HEK293 (cell line): ENCODE measurements at regions of chr2 and their contacts with region 1.

Region 1: GRCh38 chr2:197113275-197113711 is 186.8 kb upstream of the PGAP1 start:
- H3K4me3 ChIP-seq: no peak overlapping the region
- H3K27ac ChIP-seq: no peak overlapping the region
- H3K4me1 ChIP-seq: no peaks in the 10 kb centered on the region
- CTCF ChIP-seq: 0 out of 2 replicates have a peak, but pooled peaks have one; percentile 18

Region 2: DNA sequence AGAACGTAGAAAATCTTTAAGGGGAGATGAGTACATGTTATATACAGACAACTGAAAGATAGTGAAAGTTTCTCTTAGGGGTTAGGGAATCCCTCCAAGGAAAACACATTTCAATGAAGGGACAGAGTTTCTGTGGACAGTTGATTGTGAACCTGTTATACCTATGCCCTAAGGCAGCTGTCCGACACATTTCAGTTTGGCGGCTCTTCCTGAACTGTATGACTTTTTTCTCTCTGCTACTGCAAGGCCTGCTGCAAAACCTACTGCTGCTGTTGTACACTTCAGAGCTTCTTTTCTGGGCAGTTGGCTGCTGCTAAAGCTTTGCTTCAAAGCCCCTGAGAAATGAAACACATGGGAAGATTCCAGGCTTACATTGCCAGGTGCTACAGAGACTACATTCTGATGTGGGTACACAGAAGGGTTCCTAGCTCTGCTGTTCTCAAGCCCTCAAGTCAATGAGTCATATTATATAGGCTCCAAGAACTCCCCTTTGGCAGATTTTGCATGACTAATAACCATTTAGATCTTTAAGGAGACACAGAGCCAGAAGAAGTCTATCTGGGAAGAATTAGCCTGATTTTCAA is 174.0 kb before region 1 on chr2:
- CTCF ChIA-PET with region 1: no interaction called
- POLR2A ChIA-PET with region 1: no interaction called
- H3K4me3 ChIP-seq: no peak overlapping the region
- H3K27ac ChIP-seq: no peak overlapping the region
- H3K4me1 ChIP-seq: peaks cover 3% of the 10 kb centered on the region; the same call in 1 of the 2 replicates
- CTCF ChIP-seq: no peak

Region 3: GRCh38 chr2:197097578-197098366 is 15.5 kb before region 1 on chr2:
- CTCF ChIA-PET with region 1: interaction called, 16 read pairs
- POLR2A ChIA-PET with region 1: no interaction called
- H3K4me3 ChIP-seq: no peak overlapping the region
- H3K27ac ChIP-seq: no peak overlapping the region
- H3K4me1 ChIP-seq: no peaks in the 10 kb centered on the region
- CTCF ChIP-seq: no peak

Region 4: DNA sequence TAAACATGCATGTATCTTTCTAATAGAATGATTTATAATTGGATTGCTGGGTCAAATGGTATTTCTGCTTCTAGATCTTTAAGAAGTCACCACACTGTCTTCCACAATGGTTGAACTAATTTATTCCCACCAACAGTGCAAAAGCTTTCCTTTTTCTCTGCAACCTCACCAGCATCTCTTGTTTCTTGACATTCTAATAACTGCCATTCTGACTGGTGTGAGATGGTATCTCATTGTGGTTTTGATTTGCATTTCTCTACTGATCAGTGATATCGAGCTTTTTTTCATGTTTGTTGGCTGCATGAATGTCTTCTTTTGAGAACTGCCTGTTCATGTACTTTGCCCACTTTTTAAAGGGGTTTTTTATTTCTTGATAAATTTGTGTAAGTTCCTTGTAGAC is 14.8 kb after region 1 on chr2:
- CTCF ChIA-PET with region 1: interaction called, 14 read pairs
- POLR2A ChIA-PET with region 1: no interaction called
- H3K4me3 ChIP-seq: no peak overlapping the region
- H3K27ac ChIP-seq: no peak overlapping the region
- H3K4me1 ChIP-seq: no peaks in the 10 kb centered on the region; the same call in 1 of the 2 replicates
- CTCF ChIP-seq: no peak

Region 5: DNA sequence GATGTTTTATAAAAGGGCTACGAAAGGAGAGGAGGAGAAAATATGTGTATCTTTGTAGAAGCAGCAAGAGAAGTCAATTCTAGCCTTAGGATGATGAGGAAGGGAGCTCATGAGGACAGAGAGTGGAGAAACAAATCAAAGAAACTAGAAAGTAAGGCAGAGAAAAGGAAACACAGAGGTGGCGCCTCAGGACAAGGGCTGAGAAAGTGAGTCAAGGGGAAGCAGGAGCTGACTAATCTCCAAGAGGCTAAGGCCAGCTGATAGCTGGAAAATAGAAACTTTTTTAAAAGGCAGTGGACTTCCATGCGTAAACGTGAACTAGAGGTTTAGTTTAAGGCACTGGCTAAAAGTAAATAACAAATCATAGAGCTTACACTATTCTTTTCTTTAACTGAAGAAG is 23.9 kb after region 1 on chr2:
- CTCF ChIA-PET with region 1: interaction called, 19 read pairs
- POLR2A ChIA-PET with region 1: no interaction called
- H3K4me3 ChIP-seq: no peak overlapping the region
- H3K27ac ChIP-seq: no peak overlapping the region
- H3K4me1 ChIP-seq: no peaks in the 10 kb centered on the region
- CTCF ChIP-seq: no peak

Region 6: GRCh38 chr2:197159661-197160211 is 46.4 kb after region 1 on chr2:
- CTCF ChIA-PET with region 1: interaction called, 15 read pairs
- POLR2A ChIA-PET with region 1: no interaction called
- H3K4me3 ChIP-seq: no peak overlapping the region
- H3K27ac ChIP-seq: no peak overlapping the region
- H3K4me1 ChIP-seq: peaks cover 6% of the 10 kb centered on the region; the same call in 1 of the 2 replicates
- CTCF ChIP-seq: no peak

Region 7: DNA sequence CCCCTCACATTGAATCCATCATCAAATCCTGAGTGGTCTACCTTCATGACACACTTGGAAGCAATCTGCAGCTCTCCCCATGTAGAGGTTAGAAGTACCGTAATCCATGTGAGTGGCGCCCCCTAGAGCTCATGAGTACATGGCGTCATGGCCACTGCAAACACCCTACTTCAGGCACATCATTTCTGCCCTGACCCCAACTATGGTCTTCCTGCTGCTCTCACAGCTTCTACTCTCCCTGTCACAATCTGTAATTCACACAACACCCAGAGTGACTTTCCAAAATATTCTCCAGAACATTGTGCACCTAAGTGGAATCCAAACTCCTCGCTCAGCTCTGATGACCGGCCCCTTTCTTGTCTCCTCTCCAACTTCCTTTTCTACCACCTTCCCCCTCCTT is 55.4 kb after region 1 on chr2:
- CTCF ChIA-PET with region 1: interaction called, 115 read pairs
- POLR2A ChIA-PET with region 1: no interaction called
- H3K4me3 ChIP-seq: no peak overlapping the region
- H3K27ac ChIP-seq: no peak overlapping the region
- H3K4me1 ChIP-seq: no peaks in the 10 kb centered on the region
- CTCF ChIP-seq: peak; percentile 57

Region 8: GRCh38 chr2:197191177-197191939 is 78.1 kb after region 1 on chr2:
- CTCF ChIA-PET with region 1: interaction called, 20 read pairs
- POLR2A ChIA-PET with region 1: no interaction called
- H3K4me3 ChIP-seq: no peak overlapping the region
- H3K27ac ChIP-seq: no peak overlapping the region
- H3K4me1 ChIP-seq: no peaks in the 10 kb centered on the region
- CTCF ChIP-seq: no peak

Region 9: GRCh38 chr2:197201874-197202273 is 88.6 kb after region 1 on chr2:
- CTCF ChIA-PET with region 1: no interaction called
- POLR2A ChIA-PET with region 1: no interaction called
- H3K4me3 ChIP-seq: no peak overlapping the region
- H3K27ac ChIP-seq: no peak overlapping the region
- H3K4me1 ChIP-seq: no peaks in the 10 kb centered on the region
- CTCF ChIP-seq: no peak